ENCODE measurements at regions of chr12 and their contacts with region 1.

Region 1: GRCh38 chr12:1204581-1205121 is 213.6 kb downstream of the ERC1 start:
- DNase-seq: peak in 4 of 14 experiments; percentile 6 to 66 (median 44)
- ATAC-seq: peak; percentile 92
- H3K4me3 ChIP-seq: peak overlapping the region; percentile 62
- H3K4me3 Mint-ChIP-seq: no peak overlapping the region
- H3K27ac ChIP-seq: peak overlapping the region; percentile 70 to 84
- H3K27ac Mint-ChIP-seq: no peak overlapping the region
- H3K4me1 ChIP-seq: no peaks in the 10 kb centered on the region
- H3K4me1 Mint-ChIP-seq: peaks cover 21% of the 10 kb centered on the region
- H3K27me3 ChIP-seq: no peaks in the 10 kb centered on the region
- H3K27me3 Mint-ChIP-seq: no peaks in the 10 kb centered on the region
- CTCF ChIP-seq: no peak

Region 2: DNA sequence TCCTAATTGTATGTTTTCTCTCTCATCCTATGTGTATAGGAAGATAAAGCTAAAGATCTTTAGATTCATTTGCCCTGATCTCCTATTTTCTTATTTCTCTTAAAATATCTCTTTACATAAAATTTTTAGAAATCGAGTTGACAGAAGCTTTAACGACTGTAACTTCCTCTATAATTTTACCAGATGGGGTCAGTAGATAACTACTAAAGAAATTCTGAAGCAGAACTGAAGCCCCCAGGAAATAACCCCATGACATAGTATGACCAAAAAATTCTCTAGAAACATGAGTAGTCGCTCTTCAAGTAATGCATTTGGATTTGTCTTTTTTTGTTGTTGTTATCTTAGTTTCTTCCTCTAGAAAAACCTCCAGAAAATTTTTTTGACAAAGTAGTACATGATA is 74.4 kb after region 1 on chr12:
- CTCF ChIA-PET with region 1: no interaction called
- POLR2A ChIA-PET with region 1: no interaction called
- intact Hi-C with region 1: loop called in 1 of 2 experiments (anchors 2 kb)
- DNase-seq: no peak
- ATAC-seq: no peak
- H3K4me3 ChIP-seq: no peak overlapping the region
- H3K4me3 Mint-ChIP-seq: no peak overlapping the region
- H3K27ac ChIP-seq: no peak overlapping the region
- H3K27ac Mint-ChIP-seq: peak overlapping the region; percentile 89
- H3K4me1 ChIP-seq: no peaks in the 10 kb centered on the region
- H3K4me1 Mint-ChIP-seq: peaks cover 19% of the 10 kb centered on the region
- H3K27me3 ChIP-seq: no peaks in the 10 kb centered on the region
- H3K27me3 Mint-ChIP-seq: no peaks in the 10 kb centered on the region
- CTCF ChIP-seq: no peak

Region 3: GRCh38 chr12:1391722-1392121 is 187.1 kb after region 1 on chr12:
- CTCF ChIA-PET with region 1: no interaction called
- POLR2A ChIA-PET with region 1: no interaction called
- intact Hi-C with region 1: no loop called
- DNase-seq: no peak
- ATAC-seq: no peak
- H3K4me3 ChIP-seq: no peak overlapping the region
- H3K4me3 Mint-ChIP-seq: no peak overlapping the region
- H3K27ac ChIP-seq: no peak overlapping the region
- H3K27ac Mint-ChIP-seq: no peak overlapping the region
- H3K4me1 ChIP-seq: no peaks in the 10 kb centered on the region
- H3K4me1 Mint-ChIP-seq: no peaks in the 10 kb centered on the region
- H3K27me3 ChIP-seq: no peaks in the 10 kb centered on the region
- H3K27me3 Mint-ChIP-seq: no peaks in the 10 kb centered on the region
- CTCF ChIP-seq: no peak

Region 4: GRCh38 chr12:1457901-1458300 is 253.2 kb after region 1 on chr12:
- CTCF ChIA-PET with region 1: no interaction called
- POLR2A ChIA-PET with region 1: no interaction called
- intact Hi-C with region 1: no loop called
- DNase-seq: no peak
- ATAC-seq: no peak
- H3K4me3 ChIP-seq: no peak overlapping the region
- H3K4me3 Mint-ChIP-seq: no peak overlapping the region
- H3K27ac ChIP-seq: no peak overlapping the region
- H3K27ac Mint-ChIP-seq: no peak overlapping the region
- H3K4me1 ChIP-seq: no peaks in the 10 kb centered on the region
- H3K4me1 Mint-ChIP-seq: no peaks in the 10 kb centered on the region
- H3K27me3 ChIP-seq: no peaks in the 10 kb centered on the region
- H3K27me3 Mint-ChIP-seq: no peaks in the 10 kb centered on the region
- CTCF ChIP-seq: no peak